ENCODE measurements at regions of chr9 and their contacts with region 1.

Region 1: DNA sequence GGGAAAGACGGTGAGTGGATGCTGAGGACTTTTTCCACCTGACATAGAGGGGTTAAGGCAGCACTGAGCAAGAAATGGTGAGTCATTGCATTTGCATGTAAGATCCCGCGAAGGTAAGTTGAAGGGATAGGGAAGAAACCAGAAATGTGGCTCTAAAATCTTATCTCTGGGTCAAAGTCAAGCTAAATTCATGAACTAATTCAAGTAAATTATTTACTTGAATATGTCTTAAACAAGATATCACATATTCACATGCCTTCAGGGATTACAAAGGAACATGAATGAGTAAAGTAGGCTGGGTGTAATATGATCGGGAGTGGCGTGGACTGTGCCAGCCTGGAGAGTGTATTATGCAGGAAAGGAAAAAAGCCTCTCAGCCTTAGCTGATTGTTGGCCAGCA is 74.4 kb upstream of the EQTN start:
- DNase-seq: peak in 2 of 3 donors; percentile 53 to 73
- ATAC-seq: peak; percentile 94
- H3K4me3 ChIP-seq: no peak overlapping the region
- H3K4me1 ChIP-seq: peaks cover 45% of the 10 kb centered on the region
- CTCF ChIP-seq: no peak

Region 2: DNA sequence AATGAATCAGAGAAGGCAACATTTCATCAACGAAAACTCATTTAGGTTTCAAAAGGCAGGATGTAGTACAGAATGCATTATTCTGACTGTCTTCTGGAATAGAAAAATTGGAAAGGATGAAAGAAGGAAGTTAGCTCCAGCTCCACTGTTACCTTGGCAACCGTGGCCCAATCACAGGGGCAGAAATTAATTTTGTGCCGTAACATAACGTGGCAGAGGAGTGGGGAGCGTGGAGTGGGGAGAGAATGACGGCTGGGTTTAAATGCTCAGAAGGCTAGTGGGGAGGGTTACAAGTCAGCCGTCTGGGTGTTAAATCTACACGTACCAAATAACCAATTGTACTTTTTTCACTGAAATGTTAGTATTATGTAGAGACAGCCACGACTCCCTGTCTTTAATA is 42.1 kb before region 1 on chr9:
- intact Hi-C with region 1: no loop called
- DNase-seq: no peak
- ATAC-seq: no peak
- H3K4me3 ChIP-seq: no peak overlapping the region
- H3K4me1 ChIP-seq: no peaks in the 10 kb centered on the region
- CTCF ChIP-seq: no peak

Region 3: GRCh38 chr9:27445618-27446017 is 74.2 kb after region 1 on chr9:
- intact Hi-C with region 1: loop called in 1 of 2 experiments (anchors 2 kb)
- DNase-seq: no peak
- ATAC-seq: no peak
- H3K4me3 ChIP-seq: no peak overlapping the region
- H3K4me1 ChIP-seq: peaks cover 15% of the 10 kb centered on the region
- CTCF ChIP-seq: no peak

Region 4: DNA sequence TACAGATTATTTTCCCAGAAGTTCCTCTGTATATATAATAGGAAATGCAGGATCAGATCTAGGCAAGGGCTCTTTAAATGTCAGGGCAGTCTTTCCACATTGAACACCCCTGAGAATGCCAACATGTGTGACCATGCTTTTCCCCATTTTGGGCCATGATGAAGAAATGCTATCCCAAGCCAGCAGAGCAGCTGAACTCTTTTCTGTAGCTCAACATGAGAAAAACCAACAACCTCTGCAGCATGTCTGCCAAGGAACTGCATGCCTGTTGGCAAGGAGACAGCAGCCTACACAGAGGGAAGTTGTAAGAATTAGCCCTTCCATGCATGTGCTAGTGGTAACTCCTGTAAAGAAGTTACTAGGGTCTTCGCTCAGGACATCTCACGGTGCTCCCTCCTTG is 143.2 kb after region 1 on chr9:
- intact Hi-C with region 1: no loop called
- DNase-seq: no peak
- ATAC-seq: no peak
- H3K4me3 ChIP-seq: no peak overlapping the region
- H3K4me1 ChIP-seq: peaks cover 4% of the 10 kb centered on the region
- CTCF ChIP-seq: no peak

Measured in mucosa of descending colon (tissue), 3 donors.